ENCODE measurements at regions of chr16 and their contacts with region 1.

Region 1: GRCh38 chr16:71961066-71962039 is 38.8 kb downstream of the PKD1L3 start:
- DNase-seq: peak; percentile 84
- ATAC-seq: peak; percentile 82
- H3K4me3 ChIP-seq: no peak overlapping the region
- H3K4me3 Mint-ChIP-seq: no peak overlapping the region
- H3K27ac ChIP-seq: no peak overlapping the region
- H3K27ac Mint-ChIP-seq: no peak overlapping the region
- H3K4me1 ChIP-seq: peaks cover 13 to 18% of the 10 kb centered on the region in 2 donors
- H3K4me1 Mint-ChIP-seq: peaks cover 24% of the 10 kb centered on the region
- H3K27me3 ChIP-seq: no peaks in the 10 kb centered on the region
- H3K27me3 Mint-ChIP-seq: no peaks in the 10 kb centered on the region
- CTCF ChIP-seq: peak; percentile 85

Region 2: DNA sequence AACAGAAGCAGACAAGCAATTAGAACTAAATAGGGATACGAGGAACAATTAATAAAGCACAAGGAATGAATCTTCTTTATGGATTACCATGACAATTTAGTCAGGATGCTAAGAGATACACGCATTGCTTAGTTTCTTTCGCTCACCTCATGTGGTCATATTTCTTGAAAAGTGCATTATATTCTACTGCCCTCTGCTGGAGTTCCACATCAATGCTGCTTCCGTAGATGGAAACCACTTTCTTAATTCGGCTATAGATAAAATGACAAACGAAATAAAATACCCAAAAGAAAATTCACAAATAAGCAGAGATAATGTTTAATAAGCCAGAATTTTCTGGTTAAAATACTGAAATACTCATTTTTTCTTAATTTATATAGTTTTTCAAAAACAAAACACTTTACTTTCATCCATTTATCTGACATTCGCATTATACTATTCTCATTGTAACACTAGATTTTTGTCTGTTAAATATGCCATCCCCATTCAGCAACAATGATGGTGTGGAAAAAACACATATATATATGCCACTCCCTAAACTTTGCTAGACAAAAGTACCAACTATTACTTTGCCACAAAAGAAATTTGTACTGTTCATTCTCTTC is 214.8 kb before region 1 on chr16:
- CTCF ChIA-PET with region 1: interaction called, 8 read pairs
- POLR2A ChIA-PET with region 1: no interaction called
- intact Hi-C with region 1: loop called (anchors 2 kb)
- DNase-seq: peak; percentile 75
- ATAC-seq: peak; percentile 58
- H3K4me3 ChIP-seq: no peak overlapping the region
- H3K4me3 Mint-ChIP-seq: no peak overlapping the region
- H3K27ac ChIP-seq: no peak overlapping the region
- H3K27ac Mint-ChIP-seq: peak overlapping the region; percentile 50
- H3K4me1 ChIP-seq: no peaks in the 10 kb centered on the region
- H3K4me1 Mint-ChIP-seq: peaks cover 4% of the 10 kb centered on the region
- H3K27me3 ChIP-seq: no peaks in the 10 kb centered on the region
- H3K27me3 Mint-ChIP-seq: no peaks in the 10 kb centered on the region
- CTCF ChIP-seq: peak; percentile 85

Region 3: GRCh38 chr16:71894921-71895678 is 66.3 kb before region 1 on chr16 and contains the start of gene IST1:
- CTCF ChIA-PET with region 1: interaction called, 9 read pairs
- POLR2A ChIA-PET with region 1: interaction called, 7 read pairs
- intact Hi-C with region 1: loop called (anchors 5 kb)
- DNase-seq: peak; percentile 98
- ATAC-seq: peak; percentile 91
- H3K4me3 ChIP-seq: peak within 1 kb of the TSS; percentile 93 to 100 (median 99)
- H3K4me3 Mint-ChIP-seq: peak within 1 kb of the TSS; percentile 97
- H3K27ac ChIP-seq: peak within 1 kb of the TSS; percentile 83 to 88
- H3K27ac Mint-ChIP-seq: peak within 1 kb of the TSS; percentile 98
- H3K4me1 ChIP-seq: peaks cover 16 to 39% of the 10 kb centered on the region in 2 donors
- H3K4me1 Mint-ChIP-seq: peaks cover 22% of the 10 kb centered on the region
- H3K27me3 ChIP-seq: no peaks in the 10 kb centered on the region
- H3K27me3 Mint-ChIP-seq: no peaks in the 10 kb centered on the region
- CTCF ChIP-seq: no peak
- total RNA-seq, gene IST1: 268 and 302 TPM in 2 replicates

Region 4: GRCh38 chr16:71973001-71973400 is 11.6 kb after region 1 on chr16:
- CTCF ChIA-PET with region 1: interaction called, 11 read pairs
- POLR2A ChIA-PET with region 1: no interaction called
- intact Hi-C with region 1: no loop called
- DNase-seq: no peak
- ATAC-seq: no peak
- H3K4me3 ChIP-seq: no peak overlapping the region
- H3K4me3 Mint-ChIP-seq: no peak overlapping the region
- H3K27ac ChIP-seq: no peak overlapping the region
- H3K27ac Mint-ChIP-seq: no peak overlapping the region
- H3K4me1 ChIP-seq: no peaks in the 10 kb centered on the region
- H3K4me1 Mint-ChIP-seq: no peaks in the 10 kb centered on the region
- H3K27me3 ChIP-seq: no peaks in the 10 kb centered on the region
- H3K27me3 Mint-ChIP-seq: peaks cover under 1% of the 10 kb centered on the region
- CTCF ChIP-seq: no peak

Region 5: DNA sequence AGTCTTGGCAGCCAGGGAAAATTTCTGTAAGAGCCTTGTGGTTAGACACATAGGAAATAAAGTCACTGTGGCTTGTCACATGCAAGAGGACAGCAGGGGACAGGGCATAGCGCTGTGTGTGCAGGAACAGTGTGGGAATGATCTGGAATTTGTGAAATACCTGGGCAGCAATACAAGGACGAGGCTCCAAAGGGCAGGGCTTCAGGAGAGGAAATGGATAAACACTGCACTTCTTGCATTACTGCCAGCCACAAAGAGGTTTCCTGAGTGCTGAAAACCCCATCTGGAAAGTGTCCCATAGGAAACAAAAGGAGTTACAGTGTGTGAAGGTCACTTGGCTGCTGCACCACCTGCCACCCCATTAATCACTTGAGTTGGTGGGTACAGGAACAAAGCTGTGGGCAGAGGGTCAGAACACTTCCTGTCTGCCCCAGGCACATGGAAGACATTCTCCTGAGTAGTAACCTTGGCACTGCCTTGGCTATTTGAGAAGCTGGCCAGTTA is 80.9 kb after region 1 on chr16:
- CTCF ChIA-PET with region 1: no interaction called
- POLR2A ChIA-PET with region 1: no interaction called
- intact Hi-C with region 1: no loop called
- DNase-seq: no peak
- ATAC-seq: no peak
- H3K4me3 ChIP-seq: no peak overlapping the region
- H3K4me3 Mint-ChIP-seq: no peak overlapping the region
- H3K27ac ChIP-seq: no peak overlapping the region
- H3K27ac Mint-ChIP-seq: no peak overlapping the region
- H3K4me1 ChIP-seq: no peaks in the 10 kb centered on the region
- H3K4me1 Mint-ChIP-seq: no peaks in the 10 kb centered on the region
- H3K27me3 ChIP-seq: no peaks in the 10 kb centered on the region
- H3K27me3 Mint-ChIP-seq: no peaks in the 10 kb centered on the region
- CTCF ChIP-seq: no peak

Region 6: DNA sequence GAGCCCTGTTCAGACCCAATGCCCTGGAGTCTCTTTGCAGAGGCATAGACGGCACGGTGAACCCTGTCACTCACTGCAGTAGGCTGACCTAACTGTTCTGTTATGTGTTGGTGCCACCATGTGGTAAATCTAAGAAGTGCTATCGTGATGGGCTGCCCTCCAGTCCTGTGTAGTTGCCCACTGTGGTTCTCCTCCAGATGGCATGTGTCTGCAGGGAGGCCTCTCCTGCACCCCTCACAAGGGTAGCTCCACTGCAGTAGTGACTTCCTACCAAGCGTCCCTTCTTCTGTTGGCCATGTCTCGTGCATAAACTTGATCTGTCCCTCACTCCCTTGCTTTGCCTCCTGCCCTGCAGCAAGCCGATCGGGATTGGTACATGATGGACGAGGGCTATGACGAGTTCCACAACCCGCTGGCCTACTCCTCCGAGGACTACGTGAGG is 138.0 kb after region 1 on chr16:
- CTCF ChIA-PET with region 1: no interaction called
- POLR2A ChIA-PET with region 1: no interaction called
- intact Hi-C with region 1: loop called (anchors 1 kb)
- DNase-seq: peak; percentile 66
- ATAC-seq: peak; percentile 90
- H3K4me3 ChIP-seq: no peak overlapping the region
- H3K4me3 Mint-ChIP-seq: no peak overlapping the region
- H3K27ac ChIP-seq: no peak overlapping the region
- H3K27ac Mint-ChIP-seq: no peak overlapping the region
- H3K4me1 ChIP-seq: peaks cover 15 to 22% of the 10 kb centered on the region in 2 donors
- H3K4me1 Mint-ChIP-seq: peaks cover 31% of the 10 kb centered on the region
- H3K27me3 ChIP-seq: no peaks in the 10 kb centered on the region
- H3K27me3 Mint-ChIP-seq: no peaks in the 10 kb centered on the region
- CTCF ChIP-seq: peak; percentile 59

Region 7: DNA sequence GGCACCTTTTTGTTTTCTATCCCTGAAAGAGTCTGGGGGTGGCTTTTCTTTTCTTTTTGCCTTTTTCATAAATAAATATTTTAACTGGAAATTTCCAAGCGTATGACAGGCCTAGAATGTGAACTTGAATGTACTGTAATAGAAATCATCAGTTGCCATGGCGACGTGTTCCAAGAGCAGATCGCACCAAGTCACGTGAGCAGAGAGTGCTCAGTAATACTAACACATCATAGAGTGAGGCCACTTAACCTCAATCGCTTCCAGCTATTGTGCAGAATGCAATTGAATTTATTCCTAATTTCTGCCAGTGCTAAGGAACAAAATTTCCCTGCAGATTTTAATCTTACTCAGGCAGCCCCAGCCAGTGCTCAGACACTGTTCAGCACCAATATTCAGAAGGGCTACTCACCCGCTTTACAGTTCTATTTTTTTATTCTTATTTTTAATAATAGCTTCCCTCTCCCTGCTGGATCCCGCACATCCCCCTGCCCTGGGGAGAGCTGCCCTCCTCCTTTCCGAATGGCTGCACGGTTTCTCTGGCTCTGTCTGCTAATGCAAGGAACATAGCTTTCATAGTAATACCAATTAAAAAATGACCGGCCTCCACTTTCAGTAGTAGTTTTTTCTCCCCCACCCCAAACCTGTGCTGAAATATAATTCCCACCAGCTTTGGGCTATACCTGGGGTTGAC is 236.8 kb after region 1 on chr16:
- CTCF ChIA-PET with region 1: no interaction called
- POLR2A ChIA-PET with region 1: no interaction called
- intact Hi-C with region 1: no loop called
- DNase-seq: no peak
- ATAC-seq: no peak
- H3K4me3 ChIP-seq: no peak overlapping the region
- H3K4me3 Mint-ChIP-seq: no peak overlapping the region
- H3K27ac ChIP-seq: no peak overlapping the region
- H3K27ac Mint-ChIP-seq: no peak overlapping the region
- H3K4me1 ChIP-seq: peaks cover 9 to 10% of the 10 kb centered on the region in 2 donors
- H3K4me1 Mint-ChIP-seq: peaks cover 9% of the 10 kb centered on the region
- H3K27me3 ChIP-seq: no peaks in the 10 kb centered on the region
- H3K27me3 Mint-ChIP-seq: no peaks in the 10 kb centered on the region
- CTCF ChIP-seq: no peak

Measured in B cell (primary cell).